HEK293T (cell line): ENCODE measurements at regions of chr2 and their contacts with region 1.

Region 1: GRCh38 chr2:68319398-68320117 is at the start of gene CNRIP1:
- DNase-seq: peak; percentile 65

Region 2: GRCh38 chr2:68302281-68302875 is 17.2 kb before region 1 on chr2:
- CTCF ChIA-PET with region 1: no interaction called
- POLR2A ChIA-PET with region 1: interaction called, 10 read pairs
- DNase-seq: no peak

Region 3: DNA sequence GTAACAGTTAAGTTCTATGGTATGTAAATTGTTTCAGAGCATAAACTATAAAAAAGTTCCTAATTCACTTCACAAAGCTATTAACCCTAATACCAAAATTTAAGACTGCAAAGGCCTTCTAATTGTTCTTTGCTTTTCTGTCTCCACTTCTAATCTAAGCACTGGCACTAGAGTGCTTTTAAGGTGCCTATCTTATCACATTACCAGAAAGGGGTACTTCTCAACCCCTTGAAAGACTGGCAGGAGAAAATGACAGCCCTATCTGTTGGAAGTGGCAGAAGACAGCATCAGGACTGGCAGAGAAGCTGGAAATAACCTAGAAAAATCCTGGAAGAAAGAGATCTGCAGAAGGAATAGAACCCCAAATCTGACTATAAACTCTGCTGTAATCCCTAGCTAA is 10.1 kb before region 1 on chr2:
- CTCF ChIA-PET with region 1: no interaction called
- POLR2A ChIA-PET with region 1: interaction called, 15 read pairs
- DNase-seq: no peak

Region 4: GRCh38 chr2:68365087-68365486 is 45.5 kb after region 1 on chr2 and contains the start of gene PLEK:
- CTCF ChIA-PET with region 1: no interaction called
- POLR2A ChIA-PET with region 1: no interaction called
- DNase-seq: no peak